ENCODE measurements at regions of chr3 and their contacts with region 1.

Region 1: DNA sequence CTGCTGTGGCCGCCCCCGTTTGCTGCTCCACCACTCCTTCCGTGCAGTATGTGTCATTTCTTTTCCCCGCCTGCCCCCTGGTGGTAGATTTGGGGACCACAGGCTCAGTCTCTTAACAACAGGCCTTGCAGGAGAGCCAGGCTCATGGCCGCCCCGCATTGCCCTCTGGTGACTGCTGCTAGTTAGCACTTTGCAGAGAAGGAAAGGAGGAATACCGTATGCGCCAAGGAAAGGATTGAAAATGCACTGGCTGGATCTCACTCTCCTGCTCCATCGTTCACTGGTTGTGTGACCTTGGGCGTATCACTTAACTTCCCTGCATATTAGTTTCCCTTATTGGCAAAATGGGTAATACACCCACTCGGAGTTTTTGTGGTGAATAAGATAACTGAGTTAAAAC is 39.3 kb upstream of the PXYLP1 start:
- DNase-seq: peak; percentile 99
- H3K4me3 ChIP-seq: no peak overlapping the region
- H3K27ac ChIP-seq: no peak overlapping the region
- H3K4me1 ChIP-seq: no peaks in the 10 kb centered on the region
- H3K27me3 ChIP-seq: no peaks in the 10 kb centered on the region
- CTCF ChIP-seq: peak; percentile 98 to 99 (median 99)
- POLR2A ChIP-seq: no peak

Region 2: DNA sequence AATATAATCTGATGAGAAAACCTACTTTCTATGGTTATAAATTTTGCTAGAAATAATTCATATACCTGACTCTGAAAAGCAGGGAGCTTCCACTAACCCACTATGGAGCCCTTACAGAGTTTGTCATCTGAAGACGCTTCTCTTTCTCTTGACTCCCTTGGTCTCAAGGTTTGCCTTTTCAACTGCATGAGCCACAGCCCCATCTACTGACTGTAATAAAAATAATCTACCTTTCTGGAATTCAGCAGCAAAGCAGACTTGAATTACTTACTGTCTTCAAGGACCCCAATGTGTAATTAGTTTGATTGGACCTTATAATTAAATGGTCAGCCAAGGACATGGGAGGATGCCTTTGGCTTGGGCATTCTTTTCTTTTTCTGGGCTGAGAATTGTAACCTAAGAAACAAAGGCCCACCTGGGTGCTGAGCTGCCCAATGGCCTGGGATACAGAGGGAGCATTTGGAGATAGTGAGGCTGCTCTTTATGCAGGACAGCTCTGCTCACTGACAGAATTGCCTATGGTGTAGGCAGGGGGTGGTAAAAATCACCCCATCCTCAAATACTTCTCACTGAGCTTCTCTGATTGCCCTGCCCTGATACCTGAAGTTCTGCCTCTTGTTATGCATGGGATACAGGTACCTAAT is 693.1 kb before region 1 on chr3:
- intact Hi-C with region 1: no loop called
- DNase-seq: no peak
- H3K4me3 ChIP-seq: no peak overlapping the region
- H3K27ac ChIP-seq: no peak overlapping the region
- H3K4me1 ChIP-seq: peaks cover 16% of the 10 kb centered on the region
- H3K27me3 ChIP-seq: no peaks in the 10 kb centered on the region
- CTCF ChIP-seq: peak in 2 of 3 experiments; percentile 28 to 38
- POLR2A ChIP-seq: no peak

Region 3: DNA sequence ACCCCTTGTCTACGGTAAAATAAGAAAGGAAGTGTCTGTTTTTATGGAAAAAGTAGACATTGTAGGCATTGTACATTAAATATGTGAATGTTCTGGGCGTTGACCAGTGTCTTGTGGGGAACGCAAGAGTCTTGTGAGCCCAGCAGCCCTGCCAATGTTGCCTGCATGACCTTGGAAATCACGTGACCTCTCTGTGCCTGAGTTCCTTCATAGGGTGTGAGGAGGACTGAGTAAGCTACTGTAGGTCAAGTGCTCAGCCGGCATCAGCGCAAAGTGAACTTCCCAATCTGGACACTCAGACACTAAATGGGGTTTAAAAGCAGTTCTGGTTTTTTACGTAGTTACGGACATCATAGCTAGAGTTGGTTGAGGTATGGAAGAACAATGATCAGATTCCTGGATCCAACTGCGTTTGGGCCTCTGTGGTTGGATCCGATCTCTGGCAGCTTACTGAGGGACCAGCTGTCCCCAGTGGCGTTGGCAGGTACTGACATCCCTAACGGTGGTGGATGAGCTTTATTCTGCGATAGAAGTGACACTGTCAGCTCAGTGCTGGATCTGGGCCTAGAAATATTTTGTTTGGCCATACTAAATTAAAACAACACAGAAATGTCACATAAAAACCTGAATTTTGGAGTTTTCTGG is 77.4 kb before region 1 on chr3:
- intact Hi-C with region 1: loop called (anchors 5 kb)
- DNase-seq: peak; percentile 87
- H3K4me3 ChIP-seq: no peak overlapping the region
- H3K27ac ChIP-seq: peak overlapping the region in 1 of 2 donors; percentile 10
- H3K4me1 ChIP-seq: peaks cover 6% of the 10 kb centered on the region
- H3K27me3 ChIP-seq: no peaks in the 10 kb centered on the region
- CTCF ChIP-seq: peak; percentile 29 to 53 (median 52)
- POLR2A ChIP-seq: no peak